A673 (cell line): ENCODE measurements at regions of chr12 and their contacts with region 1.

Region 1: GRCh38 chr12:65306366-65307168 is 28.1 kb downstream of the MSRB3 start:
- DNase-seq: peak; percentile 88
- H3K4me3 ChIP-seq: no peak overlapping the region
- H3K27ac ChIP-seq: peak overlapping the region; percentile 80
- H3K4me1 ChIP-seq: peaks cover 53% of the 10 kb centered on the region
- H3K27me3 ChIP-seq: no peaks in the 10 kb centered on the region
- CTCF ChIP-seq: peak; percentile 82

Region 2: GRCh38 chr12:63508543-63508942 is 1798.0 kb before region 1 on chr12:
- CTCF ChIA-PET with region 1: no interaction called
- POLR2A ChIA-PET with region 1: no interaction called
- intact Hi-C with region 1: no loop called
- DNase-seq: no peak
- H3K4me3 ChIP-seq: no peak overlapping the region
- H3K27ac ChIP-seq: no peak overlapping the region
- H3K4me1 ChIP-seq: no peaks in the 10 kb centered on the region
- H3K27me3 ChIP-seq: peaks cover 2% of the 10 kb centered on the region
- CTCF ChIP-seq: no peak

Region 3: GRCh38 chr12:65510584-65511050 is 204.1 kb after region 1 on chr12:
- CTCF ChIA-PET with region 1: no interaction called
- POLR2A ChIA-PET with region 1: no interaction called
- intact Hi-C with region 1: loop called (anchors 2 kb)
- DNase-seq: peak; percentile 72
- H3K4me3 ChIP-seq: peak overlapping the region; percentile 11
- H3K27ac ChIP-seq: peak overlapping the region; percentile 57
- H3K4me1 ChIP-seq: peaks cover 23% of the 10 kb centered on the region
- H3K27me3 ChIP-seq: no peaks in the 10 kb centered on the region
- CTCF ChIP-seq: no peak

Region 4: DNA sequence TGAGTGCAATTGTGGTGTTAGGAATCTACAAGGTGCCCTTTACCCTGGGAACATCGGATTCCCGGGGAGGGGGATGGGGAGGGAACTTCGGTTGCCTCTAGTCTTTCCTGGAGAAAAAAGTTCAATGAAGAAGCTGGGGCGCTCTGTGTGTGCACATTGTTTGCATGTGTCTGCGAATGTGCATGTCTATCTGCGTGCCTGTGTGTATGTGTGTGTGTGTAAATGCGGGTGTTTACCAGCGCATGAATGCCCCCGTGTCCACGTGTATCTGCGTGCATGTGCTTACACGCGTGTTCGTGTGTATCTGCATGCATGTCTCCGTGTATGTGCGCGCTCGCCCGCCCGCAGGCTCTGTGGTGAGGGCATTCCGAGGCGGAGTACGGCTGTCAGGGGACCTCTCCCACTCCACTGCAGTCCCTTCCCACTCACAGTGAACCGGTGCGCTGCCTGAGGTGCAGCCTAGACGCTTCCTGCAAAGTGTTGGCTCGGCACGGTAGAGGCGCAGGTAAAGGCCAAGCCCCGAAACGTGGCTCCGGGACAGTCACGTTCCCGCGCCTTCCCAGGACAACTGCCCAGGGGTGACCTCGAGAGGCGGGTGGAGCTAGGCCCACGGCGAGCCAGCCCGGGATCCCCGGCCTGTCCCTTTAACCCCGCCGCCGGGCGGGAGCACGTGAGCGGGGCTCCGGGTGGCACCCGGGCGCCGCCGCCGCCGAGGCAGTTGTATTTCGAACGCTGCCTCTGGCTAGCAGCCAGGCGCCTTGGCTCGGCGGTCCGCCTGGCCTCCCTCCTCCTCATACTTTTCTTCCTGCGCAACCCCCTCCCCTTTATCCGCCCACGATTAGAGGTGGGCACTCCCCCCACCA is 517.2 kb after region 1 on chr12:
- CTCF ChIA-PET with region 1: no interaction called
- POLR2A ChIA-PET with region 1: no interaction called
- intact Hi-C with region 1: loop called (anchors 5 kb)
- DNase-seq: peak; percentile 92
- H3K4me3 ChIP-seq: peak overlapping the region; percentile 85
- H3K27ac ChIP-seq: peak overlapping the region; percentile 95
- H3K4me1 ChIP-seq: peaks cover 18% of the 10 kb centered on the region
- H3K27me3 ChIP-seq: no peaks in the 10 kb centered on the region
- CTCF ChIP-seq: no peak

Region 5: DNA sequence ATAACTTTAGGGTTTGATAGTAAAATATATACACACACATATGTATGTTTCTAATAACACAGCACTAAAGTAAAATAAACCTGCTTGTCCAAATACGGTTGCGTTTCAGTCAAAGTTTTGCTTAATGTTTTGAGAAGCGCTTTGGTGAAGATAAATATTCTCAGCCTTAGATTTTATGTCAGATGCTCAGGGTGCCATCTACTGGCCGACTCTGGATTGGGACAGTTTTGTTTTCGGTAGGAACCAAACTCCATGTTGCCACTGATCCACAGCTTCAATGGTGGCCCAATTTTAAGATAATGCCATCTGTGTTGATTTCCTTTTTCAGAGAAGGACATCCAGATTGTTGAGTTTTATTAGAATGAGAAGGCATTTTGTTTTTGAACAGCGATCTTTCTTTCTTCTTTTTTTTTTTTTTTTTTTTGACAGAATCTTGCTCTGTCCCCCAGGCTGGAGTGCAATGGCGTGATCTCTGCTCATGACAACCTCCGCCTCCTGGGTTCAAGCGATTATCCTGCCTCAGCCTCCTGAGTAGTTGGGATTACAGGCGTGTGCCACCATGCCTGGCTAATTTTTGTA is 780.9 kb after region 1 on chr12:
- CTCF ChIA-PET with region 1: interaction called, 6 read pairs
- POLR2A ChIA-PET with region 1: no interaction called
- intact Hi-C with region 1: loop called (anchors 5 kb)
- DNase-seq: peak; percentile 88
- H3K4me3 ChIP-seq: no peak overlapping the region
- H3K27ac ChIP-seq: peak overlapping the region; percentile 42
- H3K4me1 ChIP-seq: peaks cover 26% of the 10 kb centered on the region
- H3K27me3 ChIP-seq: no peaks in the 10 kb centered on the region
- CTCF ChIP-seq: peak; percentile 91

Region 6: GRCh38 chr12:66693901-66694675 is 1387.5 kb after region 1 on chr12:
- CTCF ChIA-PET with region 1: no interaction called
- POLR2A ChIA-PET with region 1: no interaction called
- intact Hi-C with region 1: loop called (anchors 5 kb)
- DNase-seq: peak; percentile 75
- H3K4me3 ChIP-seq: no peak overlapping the region
- H3K27ac ChIP-seq: no peak overlapping the region
- H3K4me1 ChIP-seq: no peaks in the 10 kb centered on the region
- H3K27me3 ChIP-seq: peaks cover 20% of the 10 kb centered on the region
- CTCF ChIP-seq: peak; percentile 70